Left cardiac atrium (tissue), 4 donors: ENCODE measurements at regions of chr15 and their contacts with region 1.

Region 1: DNA sequence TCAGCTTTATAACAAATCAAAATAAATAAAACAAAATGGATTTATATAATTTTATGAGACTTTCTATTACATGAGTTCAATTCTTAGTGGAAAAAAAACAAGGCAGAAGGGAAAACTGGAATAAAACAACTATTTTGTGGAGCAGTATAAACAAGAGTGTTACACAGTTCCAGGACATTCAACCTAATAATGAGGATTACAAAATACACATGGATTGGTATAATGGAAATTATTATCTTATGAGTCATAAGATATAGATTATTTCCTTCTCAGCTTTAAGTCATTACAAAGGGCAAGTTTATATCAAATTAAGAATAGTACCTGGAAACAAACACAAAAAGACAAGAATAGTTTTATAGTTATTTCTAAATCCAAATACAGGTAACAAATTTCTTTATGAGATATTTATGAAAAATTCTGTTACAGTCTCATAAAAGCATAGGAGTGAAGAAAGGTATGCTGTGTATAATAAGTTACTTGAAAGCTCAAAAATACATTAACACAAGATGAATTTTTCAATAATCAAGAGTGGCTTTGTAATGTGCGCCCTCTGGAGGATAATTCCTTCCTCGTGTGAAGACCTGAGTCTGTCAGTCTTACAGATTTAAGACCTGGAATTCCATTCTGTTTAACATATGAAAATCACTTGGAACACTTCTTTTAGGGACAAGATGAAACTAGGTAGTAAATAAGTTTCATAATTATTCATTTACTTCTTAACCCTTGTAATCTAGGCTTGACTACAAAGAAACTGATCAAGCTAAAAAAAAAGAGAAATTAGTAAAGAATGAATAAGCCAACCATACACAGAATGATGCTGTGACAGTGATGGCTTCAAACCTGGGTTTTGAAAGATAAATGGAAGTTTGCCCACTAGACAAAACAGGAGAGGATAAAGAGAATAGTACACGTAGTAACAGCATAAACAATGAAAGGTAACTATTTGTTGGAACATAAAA is 9.5 kb downstream of the COPS2 start:
- DNase-seq: no peak
- ATAC-seq: peak; percentile 39 to 41

Region 2: DNA sequence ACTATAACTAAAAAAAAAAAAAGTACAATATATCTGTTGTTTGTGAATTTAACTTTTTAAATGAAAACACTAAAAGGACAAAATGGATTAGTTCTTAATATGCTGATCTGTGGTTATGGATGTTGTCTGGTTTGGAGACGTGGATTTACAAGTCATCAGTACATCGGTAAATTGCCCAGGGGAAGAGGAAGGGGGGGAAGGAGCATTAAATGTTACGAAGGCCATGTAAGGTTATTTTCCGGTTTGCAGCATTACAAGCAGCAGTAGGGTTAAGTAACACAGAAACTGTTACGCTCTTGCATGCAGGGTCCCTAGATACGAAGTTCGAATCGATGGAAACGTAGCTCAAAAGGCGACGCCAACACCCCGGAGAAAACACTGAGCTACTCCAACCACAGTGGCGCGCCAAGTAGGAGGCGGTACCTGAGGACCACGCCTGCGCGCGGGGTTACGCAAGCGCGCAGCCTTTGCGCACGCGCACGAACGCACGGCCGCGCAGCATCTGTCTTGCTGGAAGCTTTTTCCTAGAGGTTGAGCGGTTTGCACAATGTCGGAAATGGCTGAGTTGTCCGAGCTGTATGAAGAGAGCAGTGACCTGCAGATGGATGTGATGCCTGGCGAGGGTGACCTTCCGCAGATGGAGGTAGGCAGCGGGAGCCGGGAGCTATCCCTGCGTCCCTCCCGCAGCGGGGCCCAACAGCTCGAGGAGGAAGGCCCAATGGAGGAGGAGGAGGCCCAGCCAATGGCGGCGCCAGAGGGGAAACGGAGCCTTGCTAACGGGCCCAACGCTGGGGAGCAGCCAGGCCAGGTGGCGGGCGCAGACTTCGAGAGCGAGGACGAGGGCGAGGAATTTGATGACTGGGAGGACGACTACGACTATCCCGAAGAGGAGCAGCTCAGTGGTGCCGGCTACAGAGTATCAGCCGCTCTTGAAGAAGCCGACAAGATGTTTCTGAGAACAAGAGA is 268.0 kb before region 1 on chr15 and contains the start of gene EID1:
- intact Hi-C with region 1: loop called in 1 of 2 experiments (anchors 5 kb)
- DNase-seq: peak; percentile 95
- ATAC-seq: peak; percentile 99
- total RNA-seq, gene EID1: 201 to 233 TPM

Region 3: DNA sequence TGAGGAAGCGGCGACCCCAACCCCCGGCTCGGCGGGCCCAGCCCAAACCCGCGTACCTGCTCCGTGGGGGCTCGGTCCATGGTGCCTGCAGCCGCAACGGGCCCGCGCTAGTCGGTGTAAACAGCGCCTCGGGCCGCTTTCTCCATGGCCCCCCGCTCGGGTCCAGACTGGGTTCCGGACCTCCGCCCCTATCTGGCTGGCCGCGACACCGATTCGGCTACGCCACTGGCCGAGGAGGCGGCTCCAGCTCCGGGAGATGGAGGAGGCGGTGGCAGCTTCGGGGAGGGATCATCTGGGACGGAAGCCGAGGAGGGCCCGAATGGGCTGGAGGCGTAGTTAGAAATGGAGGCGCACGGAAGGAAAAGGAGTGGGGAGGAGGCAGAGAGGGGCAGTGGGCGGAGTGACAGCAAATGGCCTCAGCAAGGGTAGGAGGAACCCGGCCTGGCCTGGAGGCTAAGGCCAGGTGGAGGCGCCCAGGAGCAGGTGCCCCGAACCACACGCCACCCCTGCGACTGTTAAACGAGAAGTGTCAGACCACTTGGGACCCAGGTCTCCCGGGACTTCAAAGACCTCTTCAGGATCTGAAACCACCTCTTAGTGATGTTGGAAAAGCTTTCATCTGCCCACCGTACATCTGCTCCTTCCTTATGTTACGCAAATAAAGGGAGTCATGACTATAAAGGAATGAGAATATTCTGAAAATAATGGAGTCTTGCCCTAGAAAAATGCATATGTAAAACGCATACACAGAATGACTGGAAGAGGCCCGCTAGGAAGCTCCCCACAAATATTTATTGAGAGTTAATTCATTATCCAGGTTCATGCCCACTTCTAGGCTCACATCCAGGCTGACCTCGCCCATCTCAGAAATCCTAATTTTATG is 99.5 kb before region 1 on chr15 and contains the start of gene SECISBP2L:
- intact Hi-C with region 1: loop called in 1 of 2 experiments (anchors 5 kb)
- DNase-seq: peak; percentile 95
- ATAC-seq: peak; percentile 98 to 99
- total RNA-seq, gene SECISBP2L: 30.5 to 35.0 TPM